ENCODE measurements at regions of chr10 and their contacts with region 1.

Region 1: GRCh38 chr10:4849555-4850242 is 23.7 kb downstream of the AKR1E2 start:
- DNase-seq: peak; percentile 92
- ATAC-seq: peak; percentile 93
- H3K4me3 Mint-ChIP-seq: no peak overlapping the region
- H3K27ac Mint-ChIP-seq: 0 out of 2 replicates have a peak overlapping the region, but pooled peaks have one; percentile 47
- H3K4me1 Mint-ChIP-seq: peaks cover 12% of the 10 kb centered on the region
- H3K27me3 Mint-ChIP-seq: no peaks in the 10 kb centered on the region
- CTCF ChIP-seq: peak; percentile 90

Region 2: GRCh38 chr10:4740471-4740870 is 109.2 kb before region 1 on chr10:
- CTCF ChIA-PET with region 1: no interaction called
- POLR2A ChIA-PET with region 1: no interaction called
- DNase-seq: no peak
- ATAC-seq: no peak
- H3K4me3 Mint-ChIP-seq: no peak overlapping the region
- H3K27ac Mint-ChIP-seq: no peak overlapping the region
- H3K4me1 Mint-ChIP-seq: peaks cover 3% of the 10 kb centered on the region; the same call in 1 of the 2 replicates
- H3K27me3 Mint-ChIP-seq: no peaks in the 10 kb centered on the region
- CTCF ChIP-seq: no peak

Region 3: GRCh38 chr10:4813023-4813422 is 36.7 kb before region 1 on chr10:
- CTCF ChIA-PET with region 1: interaction called, 17 read pairs
- POLR2A ChIA-PET with region 1: no interaction called
- DNase-seq: no peak
- ATAC-seq: no peak
- H3K4me3 Mint-ChIP-seq: no peak overlapping the region
- H3K27ac Mint-ChIP-seq: no peak overlapping the region
- H3K4me1 Mint-ChIP-seq: peaks cover 13% of the 10 kb centered on the region
- H3K27me3 Mint-ChIP-seq: no peaks in the 10 kb centered on the region
- CTCF ChIP-seq: no peak

Region 4: GRCh38 chr10:4839401-4839800 is 10.3 kb before region 1 on chr10:
- CTCF ChIA-PET with region 1: interaction called, 34 read pairs
- POLR2A ChIA-PET with region 1: no interaction called
- DNase-seq: no peak
- ATAC-seq: 0 out of 2 replicates have a peak, but pooled peaks have one; percentile 32
- H3K4me3 Mint-ChIP-seq: no peak overlapping the region
- H3K27ac Mint-ChIP-seq: no peak overlapping the region
- H3K4me1 Mint-ChIP-seq: no peaks in the 10 kb centered on the region
- H3K27me3 Mint-ChIP-seq: no peaks in the 10 kb centered on the region
- CTCF ChIP-seq: no peak

Region 5: GRCh38 chr10:4981722-4982471 is 132.2 kb after region 1 on chr10:
- CTCF ChIA-PET with region 1: interaction called, 70 read pairs
- POLR2A ChIA-PET with region 1: no interaction called
- DNase-seq: peak; percentile 30
- ATAC-seq: peak; percentile 90
- H3K4me3 Mint-ChIP-seq: no peak overlapping the region; the same call in 1 of the 2 replicates
- H3K27ac Mint-ChIP-seq: no peak overlapping the region
- H3K4me1 Mint-ChIP-seq: peaks cover 21% of the 10 kb centered on the region
- H3K27me3 Mint-ChIP-seq: no peaks in the 10 kb centered on the region; the same call in 1 of the 2 replicates
- CTCF ChIP-seq: peak; percentile 49

Region 6: GRCh38 chr10:5094265-5095205 is 244.8 kb after region 1 on chr10 and contains the start of gene AKR1C3:
- CTCF ChIA-PET with region 1: interaction called, 28 read pairs
- POLR2A ChIA-PET with region 1: no interaction called
- DNase-seq: no peak
- ATAC-seq: peak; percentile 75
- H3K4me3 Mint-ChIP-seq: peak within 1 kb of the TSS; percentile 24
- H3K27ac Mint-ChIP-seq: peak within 1 kb of the TSS; percentile 80; the same call in 1 of the 2 replicates
- H3K4me1 Mint-ChIP-seq: peaks cover 8% of the 10 kb centered on the region
- H3K27me3 Mint-ChIP-seq: no peaks in the 10 kb centered on the region; the same call in 1 of the 2 replicates
- CTCF ChIP-seq: peak; percentile 32
- total RNA-seq, gene AKR1C3: 6.7 to 9.0 TPM (median 8.6 TPM) in 3 replicates

Measured in WTC11 (cell line).